ENCODE measurements at regions of chr6 and their contacts with region 1.

Region 1: GRCh38 chr6:107977283-107977682 is 19.3 kb upstream of the SEC63 start:
- DNase-seq: no peak
- ATAC-seq: no peak
- H3K4me3 ChIP-seq: no peak overlapping the region
- H3K27ac ChIP-seq: no peak overlapping the region
- H3K4me1 ChIP-seq: no peaks in the 10 kb centered on the region
- H3K27me3 ChIP-seq: no peaks in the 10 kb centered on the region
- CTCF ChIP-seq: peak in 1 of 5 experiments; percentile 17
- POLR2A ChIP-seq: no peak

Region 2: DNA sequence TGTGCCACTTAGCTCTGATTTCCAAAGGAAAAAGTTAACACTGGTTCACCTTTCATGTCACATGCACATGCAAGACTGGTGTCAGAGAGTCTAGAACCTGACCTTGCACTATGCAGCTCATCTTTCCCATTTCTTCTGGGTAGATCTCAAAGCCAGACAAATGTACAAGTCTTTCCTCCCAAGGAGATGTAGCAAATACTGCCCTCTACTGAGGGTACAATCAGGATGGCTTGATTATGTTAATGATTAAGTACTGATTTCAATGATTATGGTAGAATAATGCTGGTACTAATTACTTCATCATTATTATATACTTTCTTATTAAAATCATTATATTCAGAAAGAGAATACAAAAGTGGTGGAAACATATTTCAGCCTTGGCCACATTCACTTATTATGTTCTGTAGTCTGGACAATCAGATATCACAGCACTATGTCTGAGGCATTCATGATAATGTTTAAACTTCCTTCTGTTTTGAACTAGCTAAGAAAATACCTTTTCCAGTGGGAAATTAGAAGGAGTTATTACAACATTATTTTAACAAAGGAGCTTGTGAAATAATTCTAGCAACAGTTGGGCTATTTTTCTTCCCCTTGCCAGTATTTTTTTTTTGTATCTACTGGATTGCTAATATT is 515.0 kb after region 1 on chr6:
- in situ Hi-C with region 1: loop called in 1 of 4 experiments (anchors 25 kb)
- intact Hi-C with region 1: no loop called
- DNase-seq: no peak
- ATAC-seq: peak; percentile 47 to 80
- H3K4me3 ChIP-seq: no peak overlapping the region
- H3K27ac ChIP-seq: no peak overlapping the region
- H3K4me1 ChIP-seq: peaks cover 0 to 7% of the 10 kb centered on the region in 2 donors
- H3K27me3 ChIP-seq: no peaks in the 10 kb centered on the region
- CTCF ChIP-seq: peak; percentile 24 to 61 (median 31)
- POLR2A ChIP-seq: no peak

Region 3: DNA sequence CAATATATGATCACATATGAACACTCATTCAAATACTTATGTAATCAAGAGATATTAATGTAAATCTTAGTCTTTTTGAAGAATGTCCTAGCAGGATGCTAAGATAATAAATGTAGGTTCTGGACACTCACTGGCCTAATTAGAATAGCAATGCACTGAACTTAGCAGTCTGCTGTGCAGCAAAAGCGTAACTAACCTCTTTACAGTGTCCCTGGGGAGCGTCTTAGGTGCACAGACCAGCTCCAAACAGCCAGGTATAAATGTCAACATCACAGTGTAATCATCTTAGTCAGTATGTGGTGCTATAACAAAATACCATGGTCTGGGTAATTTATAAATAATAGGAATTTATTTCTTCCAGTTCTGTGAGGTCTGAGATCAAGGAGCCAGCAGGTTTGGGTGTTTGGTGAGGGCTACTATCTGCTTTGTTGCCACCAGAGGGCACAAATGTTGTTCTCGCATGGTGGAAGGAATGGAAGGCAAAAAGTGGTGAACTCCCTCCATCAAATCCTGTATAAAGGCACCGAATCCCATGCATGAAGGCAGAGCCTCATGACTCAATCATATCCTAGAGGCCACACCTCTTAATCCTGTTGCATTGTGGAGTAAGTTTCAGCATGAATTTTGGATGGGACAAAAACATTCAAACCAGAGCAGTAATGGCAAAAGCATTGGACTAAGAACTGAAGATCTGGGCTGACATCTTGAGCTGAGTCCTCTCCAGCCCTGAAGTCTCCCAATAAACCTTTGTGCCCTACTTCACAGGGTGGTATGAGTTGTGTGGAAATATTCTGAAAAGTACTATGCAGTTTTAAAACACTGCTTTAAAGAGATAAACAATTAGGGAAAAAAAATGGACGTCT is 541.7 kb after region 1 on chr6:
- in situ Hi-C with region 1: loop called in 1 of 4 experiments (anchors 25 kb)
- intact Hi-C with region 1: no loop called
- DNase-seq: no peak
- ATAC-seq: no peak
- H3K4me3 ChIP-seq: no peak overlapping the region
- H3K27ac ChIP-seq: no peak overlapping the region
- H3K4me1 ChIP-seq: no peaks in the 10 kb centered on the region
- H3K27me3 ChIP-seq: no peaks in the 10 kb centered on the region
- CTCF ChIP-seq: no peak
- POLR2A ChIP-seq: no peak

Region 4: DNA sequence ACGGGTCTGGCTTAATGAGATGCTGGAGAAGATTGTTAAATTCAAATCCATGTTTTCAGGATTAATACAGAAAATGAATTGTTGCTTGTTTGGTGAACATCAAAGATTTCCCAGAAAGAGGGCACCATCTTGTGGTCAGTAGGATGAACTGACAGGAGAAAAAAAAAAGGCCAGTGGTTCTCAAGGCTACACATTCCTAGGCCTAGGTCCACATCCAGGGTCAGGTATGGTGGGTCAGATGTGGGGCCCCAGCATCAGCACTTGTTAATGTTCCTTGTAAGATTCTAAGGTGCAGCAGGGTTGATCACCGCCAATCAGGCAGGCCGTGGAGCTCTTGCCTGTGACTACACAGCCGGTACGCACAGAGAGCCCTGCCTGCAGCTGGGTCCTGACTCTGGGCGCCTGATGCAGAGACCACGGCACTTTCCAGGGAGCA is 549.5 kb after region 1 on chr6:
- in situ Hi-C with region 1: loop called in 1 of 4 experiments (anchors 25 kb)
- intact Hi-C with region 1: loop called (anchors 2 kb)
- DNase-seq: no peak
- ATAC-seq: peak in 1 of 2 donors; percentile 52
- H3K4me3 ChIP-seq: no peak overlapping the region
- H3K27ac ChIP-seq: no peak overlapping the region
- H3K4me1 ChIP-seq: no peaks in the 10 kb centered on the region
- H3K27me3 ChIP-seq: no peaks in the 10 kb centered on the region
- CTCF ChIP-seq: peak; percentile 66 to 84 (median 70)
- POLR2A ChIP-seq: no peak